ENCODE measurements at regions of chr1 and their contacts with region 1.

Region 1: GRCh38 chr1:110053557-110054428 is 16.7 kb downstream of the ALX3 start:
- DNase-seq: peak; percentile 39
- H3K4me3 ChIP-seq: no peak overlapping the region
- H3K27ac ChIP-seq: no peak overlapping the region
- H3K4me1 ChIP-seq: no peaks in the 10 kb centered on the region
- H3K27me3 ChIP-seq: no peaks in the 10 kb centered on the region
- CTCF ChIP-seq: peak; percentile 83 to 97
- POLR2A ChIP-seq: no peak

Region 2: DNA sequence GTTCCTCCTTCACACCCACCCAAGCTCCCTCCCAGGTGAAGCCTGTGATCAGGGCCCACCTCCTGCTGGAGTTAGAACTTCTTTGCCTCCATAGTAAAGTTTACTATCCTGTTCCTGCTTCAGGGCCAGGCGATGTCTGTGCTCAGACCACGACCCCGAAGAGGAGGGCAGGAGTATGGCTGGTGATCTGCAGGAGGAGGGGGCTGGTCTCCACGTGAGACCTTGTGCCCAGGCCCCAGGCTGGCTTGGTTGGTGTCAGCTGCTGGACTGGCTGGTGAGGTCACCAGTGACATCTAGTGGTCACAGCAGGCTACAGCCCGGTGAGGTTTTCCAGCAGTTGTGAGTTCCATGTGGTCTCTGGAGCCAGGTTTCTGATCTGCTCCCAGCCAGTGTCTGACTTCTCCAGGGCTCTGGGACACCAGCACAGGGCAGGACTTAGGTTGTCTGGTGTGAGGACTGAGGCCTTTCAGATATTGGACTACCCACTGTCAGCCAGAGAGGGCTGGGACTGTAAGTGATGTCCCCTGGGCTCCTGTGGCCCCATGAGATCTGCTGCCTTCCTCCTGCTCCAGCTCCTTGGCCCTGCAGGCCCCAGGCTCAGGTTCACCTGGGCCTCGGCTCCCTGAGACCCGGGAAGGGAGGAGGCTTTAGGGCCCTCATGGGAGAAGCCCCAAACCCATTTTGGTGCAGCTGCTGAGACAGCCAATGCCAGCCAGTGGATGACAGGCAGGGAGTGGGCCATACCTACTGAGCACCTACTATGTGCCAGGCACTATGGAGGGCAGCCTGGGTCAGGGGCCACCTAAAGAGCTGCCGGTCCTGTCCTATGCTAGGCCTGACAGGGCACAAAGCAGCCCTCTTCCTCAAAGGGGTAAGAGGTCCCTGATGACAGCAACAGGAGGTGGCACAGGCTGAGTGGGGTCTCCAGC is 52.5 kb after region 1 on chr1:
- CTCF ChIA-PET with region 1: interaction called, 65 read pairs
- POLR2A ChIA-PET with region 1: no interaction called
- dilution Hi-C with region 1: no loop called
- intact Hi-C with region 1: loop called (anchors 1 kb)
- DNase-seq: peak; percentile 65
- H3K4me3 ChIP-seq: no peak overlapping the region
- H3K27ac ChIP-seq: no peak overlapping the region
- H3K4me1 ChIP-seq: peaks cover 3% of the 10 kb centered on the region
- H3K27me3 ChIP-seq: peaks cover 0 to 3% of the 10 kb centered on the region in 2 experiments
- CTCF ChIP-seq: peak; percentile 80 to 96
- POLR2A ChIP-seq: no peak

Measured in endothelial cell of umbilical vein (primary cell).